ENCODE measurements at regions of chr12 and their contacts with region 1.

Region 1: DNA sequence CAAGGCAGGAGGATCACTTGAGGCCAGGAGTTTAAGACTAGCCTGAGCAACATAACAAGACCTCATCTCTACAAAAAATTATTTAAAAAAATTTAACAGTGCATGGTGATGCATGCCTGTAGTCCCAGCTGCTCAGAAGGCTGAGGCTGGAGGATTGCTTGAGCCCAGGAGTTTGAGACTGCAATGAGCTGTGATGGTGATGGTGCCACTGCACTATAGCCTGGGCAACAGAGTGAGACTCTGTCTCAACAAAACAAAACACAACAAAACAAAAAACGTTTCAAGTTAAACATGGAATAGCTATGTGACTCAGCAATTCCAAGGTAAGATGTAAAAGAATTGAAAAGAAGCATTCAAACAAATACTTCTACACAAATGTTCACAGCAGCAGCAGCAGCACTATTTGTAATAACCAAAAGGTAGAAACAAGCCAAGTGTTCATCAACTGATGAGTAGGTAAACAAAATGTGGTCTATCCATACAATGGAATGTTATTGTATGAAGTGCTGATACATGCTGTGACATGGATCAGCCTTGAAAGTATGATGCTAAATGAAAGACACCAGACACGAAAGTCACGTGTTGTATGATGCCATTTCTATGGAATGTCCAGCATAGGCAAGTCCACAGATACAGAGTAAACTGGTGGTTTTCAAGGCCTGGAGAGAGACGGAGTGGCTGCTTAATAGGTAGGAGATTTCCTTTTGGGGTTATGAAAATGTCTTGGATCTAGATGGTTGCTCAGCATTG is 31.4 kb downstream of the CFAP251 start:
- DNase-seq: peak; percentile 99
- H3K4me3 ChIP-seq: peak overlapping the region; percentile 6 to 40 (median 7)
- H3K27ac ChIP-seq: peak overlapping the region; percentile 97
- H3K4me1 ChIP-seq: peaks cover 9% of the 10 kb centered on the region
- H3K27me3 ChIP-seq: no peaks in the 10 kb centered on the region
- CTCF ChIP-seq: no peak

Region 2: DNA sequence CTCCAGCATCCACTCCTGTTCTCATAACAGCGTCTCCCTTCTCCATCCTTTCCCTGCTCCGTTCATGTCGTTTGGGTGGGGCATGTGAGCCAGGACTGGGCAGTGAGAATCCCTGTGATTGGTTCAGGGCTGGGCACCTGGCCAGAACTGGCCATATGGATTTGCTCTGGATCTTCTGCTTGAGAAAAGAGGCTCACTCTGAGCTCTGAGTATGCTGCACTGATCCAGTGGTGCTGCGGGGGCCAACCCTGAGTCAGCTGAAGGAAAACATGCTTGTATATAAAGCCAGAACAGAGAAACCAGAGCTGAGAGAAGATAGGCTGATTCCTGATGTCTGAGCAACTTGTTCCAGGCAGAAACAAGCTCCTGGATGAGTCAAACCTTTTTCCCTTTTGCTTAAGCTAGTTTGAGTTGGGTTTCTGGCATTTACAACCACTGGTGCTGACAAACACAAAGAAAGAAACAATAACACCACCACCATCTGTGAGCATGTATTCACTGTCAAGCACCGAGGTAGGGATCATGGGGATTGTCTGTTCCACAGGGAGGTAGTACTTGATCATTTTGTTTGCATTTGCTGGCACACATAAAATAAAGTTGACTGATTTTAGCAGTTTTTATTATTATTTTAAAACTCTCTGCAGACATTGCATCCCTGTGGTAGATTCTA is 77.1 kb before region 1 on chr12:
- CTCF ChIA-PET with region 1: no interaction called
- dilution Hi-C with region 1: no loop called
- in situ Hi-C with region 1: no loop called
- intact Hi-C with region 1: no loop called
- DNase-seq: peak; percentile 91
- H3K4me3 ChIP-seq: no peak overlapping the region
- H3K27ac ChIP-seq: no peak overlapping the region
- H3K4me1 ChIP-seq: peaks cover 5% of the 10 kb centered on the region
- H3K27me3 ChIP-seq: no peaks in the 10 kb centered on the region
- CTCF ChIP-seq: no peak

Region 3: GRCh38 chr12:121905746-121906145 is 44.1 kb before region 1 on chr12:
- CTCF ChIA-PET with region 1: no interaction called
- dilution Hi-C with region 1: loop called (anchors 5 kb)
- in situ Hi-C with region 1: no loop called
- intact Hi-C with region 1: no loop called
- DNase-seq: peak; percentile 20
- H3K4me3 ChIP-seq: no peak overlapping the region
- H3K27ac ChIP-seq: no peak overlapping the region
- H3K4me1 ChIP-seq: no peaks in the 10 kb centered on the region
- H3K27me3 ChIP-seq: no peaks in the 10 kb centered on the region
- CTCF ChIP-seq: no peak

Region 4: GRCh38 chr12:121925358-121925695 is 24.5 kb before region 1 on chr12:
- CTCF ChIA-PET with region 1: no interaction called
- dilution Hi-C with region 1: no loop called
- in situ Hi-C with region 1: no loop called
- intact Hi-C with region 1: loop called (anchors 1 kb)
- DNase-seq: no peak
- H3K4me3 ChIP-seq: no peak overlapping the region
- H3K27ac ChIP-seq: peak overlapping the region; percentile 59
- H3K4me1 ChIP-seq: peaks cover 22% of the 10 kb centered on the region
- H3K27me3 ChIP-seq: no peaks in the 10 kb centered on the region
- CTCF ChIP-seq: no peak

Region 5: GRCh38 chr12:122003651-122004611 is 54.1 kb after region 1 on chr12:
- CTCF ChIA-PET with region 1: no interaction called
- dilution Hi-C with region 1: no loop called
- in situ Hi-C with region 1: no loop called
- intact Hi-C with region 1: loop called (anchors 5 kb)
- DNase-seq: no peak
- H3K4me3 ChIP-seq: no peak overlapping the region
- H3K27ac ChIP-seq: no peak overlapping the region
- H3K4me1 ChIP-seq: peaks cover 4% of the 10 kb centered on the region
- H3K27me3 ChIP-seq: no peaks in the 10 kb centered on the region
- CTCF ChIP-seq: no peak

Region 6: DNA sequence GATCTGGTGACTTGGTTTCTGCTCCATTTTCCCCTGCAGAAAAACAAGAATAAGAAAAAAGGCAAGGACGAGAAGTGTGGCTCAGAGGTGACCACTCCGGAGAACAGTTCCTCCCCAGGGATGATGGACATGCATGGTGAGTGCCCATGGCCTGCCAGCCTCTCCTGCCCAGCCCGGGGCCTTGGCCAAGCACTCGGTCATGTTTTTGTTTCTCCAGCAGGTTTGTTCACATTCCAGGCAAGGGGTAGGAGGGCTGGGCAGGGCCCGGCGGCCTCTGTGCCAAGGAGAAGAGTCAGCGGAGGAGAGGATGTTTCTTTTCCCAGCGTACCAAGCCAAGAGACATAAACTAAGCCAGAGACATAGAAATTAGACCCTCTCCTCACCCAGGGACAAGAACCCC is 85.5 kb after region 1 on chr12:
- CTCF ChIA-PET with region 1: no interaction called
- dilution Hi-C with region 1: loop called (anchors 5 kb)
- in situ Hi-C with region 1: no loop called
- intact Hi-C with region 1: no loop called
- DNase-seq: peak; percentile 69
- H3K4me3 ChIP-seq: no peak overlapping the region
- H3K27ac ChIP-seq: peak overlapping the region; percentile 42
- H3K4me1 ChIP-seq: peaks cover 19% of the 10 kb centered on the region
- H3K27me3 ChIP-seq: no peaks in the 10 kb centered on the region
- CTCF ChIP-seq: no peak

Region 7: DNA sequence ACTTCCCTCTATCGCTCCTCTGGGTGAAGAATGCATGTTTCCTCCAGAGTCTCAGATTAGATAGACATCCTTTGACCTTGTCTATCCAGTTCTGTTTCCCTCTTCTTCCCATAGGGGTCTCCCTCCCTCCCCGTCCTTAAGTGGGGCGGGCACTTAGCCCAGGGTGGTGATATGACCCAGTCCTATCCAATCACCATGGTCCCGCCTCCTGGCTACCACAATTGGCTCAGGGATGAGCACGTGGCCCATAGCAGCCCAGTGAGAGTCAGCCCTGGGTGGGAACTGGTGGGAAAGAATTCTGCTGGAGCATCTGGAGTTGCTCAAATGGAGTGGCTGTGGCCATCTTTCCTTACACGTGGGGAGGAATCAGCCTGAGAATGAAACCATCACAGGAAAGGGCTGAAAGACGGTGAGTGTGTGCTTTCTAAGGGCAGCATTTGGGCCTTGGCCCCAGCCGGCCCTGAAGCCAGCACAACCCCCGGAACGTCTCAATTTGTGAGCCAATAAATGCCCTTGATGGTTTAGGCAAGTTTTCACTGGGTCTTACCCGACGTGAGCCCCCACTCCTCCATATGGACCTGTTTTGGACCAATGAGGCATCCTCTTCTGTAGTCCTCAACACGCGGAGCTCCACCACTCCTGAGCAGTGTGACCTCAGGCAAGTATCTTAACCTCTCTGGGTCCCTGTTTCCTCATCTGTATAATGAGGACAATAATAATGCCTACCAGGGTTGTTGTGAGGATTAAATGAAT is 114.4 kb after region 1 on chr12:
- CTCF ChIA-PET with region 1: no interaction called
- dilution Hi-C with region 1: no loop called
- in situ Hi-C with region 1: no loop called
- intact Hi-C with region 1: no loop called
- DNase-seq: peak; percentile 37
- H3K4me3 ChIP-seq: no peak overlapping the region
- H3K27ac ChIP-seq: no peak overlapping the region
- H3K4me1 ChIP-seq: peaks cover 16% of the 10 kb centered on the region
- H3K27me3 ChIP-seq: no peaks in the 10 kb centered on the region
- CTCF ChIP-seq: peak; percentile 10 to 21

Region 8: DNA sequence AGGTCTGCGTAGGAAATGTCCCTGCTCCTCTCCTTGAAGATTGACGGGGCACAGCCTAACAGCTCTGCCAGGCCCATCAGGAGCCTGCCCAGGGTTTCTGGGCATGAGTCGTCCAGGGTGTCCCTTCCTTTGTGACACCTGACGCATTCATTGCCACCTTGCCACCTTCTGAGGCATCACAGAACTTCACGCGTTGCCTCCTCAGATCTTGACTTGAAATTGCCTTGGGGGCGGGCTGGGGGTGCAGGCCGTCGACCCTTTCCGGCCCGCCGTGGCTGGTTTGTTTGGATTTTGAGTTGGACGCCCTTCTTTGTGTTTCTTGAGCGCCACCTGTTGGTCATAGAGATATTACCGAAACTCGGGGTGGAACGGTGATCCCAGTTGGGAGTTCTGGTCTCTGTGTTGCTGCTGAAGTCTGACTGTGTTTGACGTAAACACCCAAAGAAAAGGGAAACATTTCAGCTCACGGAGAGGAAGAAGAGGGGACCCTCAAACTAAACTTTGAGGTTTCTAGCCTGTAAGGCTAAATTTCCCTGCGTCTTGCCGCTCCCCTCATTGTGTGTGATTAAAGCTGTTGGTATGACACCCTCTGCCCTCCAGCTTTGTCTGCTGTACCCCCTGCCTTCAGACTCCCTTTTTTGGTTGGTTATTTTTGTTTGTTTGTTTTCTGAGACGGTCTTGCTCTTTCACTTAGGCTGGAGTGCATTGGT is 173.4 kb after region 1 on chr12:
- CTCF ChIA-PET with region 1: no interaction called
- dilution Hi-C with region 1: no loop called
- in situ Hi-C with region 1: no loop called
- intact Hi-C with region 1: no loop called
- DNase-seq: peak; percentile 65
- H3K4me3 ChIP-seq: no peak overlapping the region
- H3K27ac ChIP-seq: no peak overlapping the region
- H3K4me1 ChIP-seq: peaks cover 9% of the 10 kb centered on the region
- H3K27me3 ChIP-seq: no peaks in the 10 kb centered on the region
- CTCF ChIP-seq: peak; percentile 52 to 71

Measured in mammary epithelial cell (primary cell).